ENCODE measurements at regions of chr3 and their contacts with region 1.

Region 1: DNA sequence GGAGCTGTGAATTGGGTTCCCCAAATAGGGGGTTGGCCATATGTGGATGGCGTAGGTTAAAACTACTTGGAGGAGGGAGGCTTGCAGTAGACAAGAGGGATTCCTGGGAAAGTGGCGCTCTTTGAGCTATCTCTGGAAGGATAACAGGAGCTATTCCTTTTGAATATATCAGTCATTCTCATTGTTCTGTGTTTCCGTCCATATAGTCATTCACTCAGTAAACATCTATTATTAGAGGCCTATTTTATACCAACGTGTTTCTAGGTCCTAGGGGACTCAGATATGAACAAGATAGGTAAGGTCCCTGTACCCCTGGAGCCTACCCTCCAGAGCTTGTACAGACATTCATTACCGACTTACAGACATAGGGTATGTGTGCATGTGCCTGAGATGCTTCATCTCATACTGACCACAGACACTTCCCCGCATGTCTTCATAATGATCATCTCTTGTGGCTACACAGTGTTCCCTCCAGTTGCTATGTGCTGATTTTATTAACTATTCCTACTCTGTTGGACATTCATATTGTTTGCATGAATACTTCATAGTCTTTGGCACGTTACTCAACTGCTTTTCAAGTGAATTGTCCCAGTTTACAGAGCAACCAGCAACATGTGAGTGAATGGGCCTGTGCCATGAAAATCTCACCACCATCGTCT is 55.8 kb upstream of the VILL start:
- DNase-seq: no peak

Region 2: DNA sequence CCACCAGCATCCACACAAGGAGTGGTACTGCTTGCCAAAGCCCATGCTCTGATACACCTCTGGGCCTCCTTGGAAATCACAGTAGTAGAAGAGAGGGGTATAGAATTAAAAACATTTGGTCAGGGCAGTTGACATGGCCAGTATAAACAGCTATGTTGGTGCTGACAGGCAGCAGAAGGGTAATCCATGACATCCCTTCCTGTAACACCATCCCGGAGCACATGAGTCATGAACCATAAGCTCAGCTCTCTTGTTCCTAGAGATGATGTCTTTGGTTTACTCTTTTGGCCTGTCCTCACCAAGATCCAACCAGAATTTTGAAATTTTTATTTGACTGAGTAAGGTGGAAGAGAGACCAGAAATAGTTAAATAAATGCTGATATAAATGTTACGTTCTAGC is 205.6 kb before region 1 on chr3:
- intact Hi-C with region 1: no loop called
- DNase-seq: no peak

Region 3: GRCh38 chr3:37980462-37981348 is 45.9 kb after region 1 on chr3:
- intact Hi-C with region 1: loop called in 1 of 2 experiments (anchors 1 kb)
- DNase-seq: no peak

Measured in posterior vena cava (tissue), 2 donors.